ENCODE measurements at regions of chr6 and their contacts with region 1.

Region 1: GRCh38 chr6:134422426-134423231 is 104.7 kb upstream of the SGK1 start:
- DNase-seq: peak; percentile 98
- H3K4me3 ChIP-seq: no peak overlapping the region
- H3K27ac ChIP-seq: peak overlapping the region; percentile 95
- H3K4me1 ChIP-seq: peaks cover 48% of the 10 kb centered on the region
- H3K27me3 ChIP-seq: no peaks in the 10 kb centered on the region
- CTCF ChIP-seq: no peak

Region 2: GRCh38 chr6:134247231-134247833 is 175.3 kb before region 1 on chr6:
- CTCF ChIA-PET with region 1: no interaction called
- dilution Hi-C with region 1: no loop called
- in situ Hi-C with region 1: no loop called
- intact Hi-C with region 1: no loop called
- DNase-seq: peak; percentile 78
- H3K4me3 ChIP-seq: no peak overlapping the region
- H3K27ac ChIP-seq: peak overlapping the region; percentile 37
- H3K4me1 ChIP-seq: peaks cover 22% of the 10 kb centered on the region
- H3K27me3 ChIP-seq: no peaks in the 10 kb centered on the region
- CTCF ChIP-seq: no peak

Region 3: GRCh38 chr6:134288538-134289203 is 134.0 kb before region 1 on chr6:
- CTCF ChIA-PET with region 1: no interaction called
- dilution Hi-C with region 1: no loop called
- in situ Hi-C with region 1: no loop called
- intact Hi-C with region 1: loop called (anchors 2 kb)
- DNase-seq: peak; percentile 97
- H3K4me3 ChIP-seq: peak overlapping the region in 1 of 3 experiments; percentile 4
- H3K27ac ChIP-seq: peak overlapping the region; percentile 100
- H3K4me1 ChIP-seq: peaks cover 19% of the 10 kb centered on the region
- H3K27me3 ChIP-seq: no peaks in the 10 kb centered on the region
- CTCF ChIP-seq: no peak

Region 4: GRCh38 chr6:134322216-134322615 is 100.4 kb before region 1 on chr6:
- CTCF ChIA-PET with region 1: no interaction called
- dilution Hi-C with region 1: no loop called
- in situ Hi-C with region 1: no loop called
- intact Hi-C with region 1: no loop called
- DNase-seq: no peak
- H3K4me3 ChIP-seq: no peak overlapping the region
- H3K27ac ChIP-seq: no peak overlapping the region
- H3K4me1 ChIP-seq: peaks cover 4% of the 10 kb centered on the region
- H3K27me3 ChIP-seq: no peaks in the 10 kb centered on the region
- CTCF ChIP-seq: no peak

Region 5: GRCh38 chr6:134379086-134379485 is 43.5 kb before region 1 on chr6:
- CTCF ChIA-PET with region 1: no interaction called
- dilution Hi-C with region 1: loop called (anchors 5 kb)
- in situ Hi-C with region 1: no loop called
- intact Hi-C with region 1: no loop called
- DNase-seq: peak; percentile 97
- H3K4me3 ChIP-seq: no peak overlapping the region
- H3K27ac ChIP-seq: peak overlapping the region; percentile 64
- H3K4me1 ChIP-seq: peaks cover 34% of the 10 kb centered on the region
- H3K27me3 ChIP-seq: no peaks in the 10 kb centered on the region
- CTCF ChIP-seq: no peak

Region 6: DNA sequence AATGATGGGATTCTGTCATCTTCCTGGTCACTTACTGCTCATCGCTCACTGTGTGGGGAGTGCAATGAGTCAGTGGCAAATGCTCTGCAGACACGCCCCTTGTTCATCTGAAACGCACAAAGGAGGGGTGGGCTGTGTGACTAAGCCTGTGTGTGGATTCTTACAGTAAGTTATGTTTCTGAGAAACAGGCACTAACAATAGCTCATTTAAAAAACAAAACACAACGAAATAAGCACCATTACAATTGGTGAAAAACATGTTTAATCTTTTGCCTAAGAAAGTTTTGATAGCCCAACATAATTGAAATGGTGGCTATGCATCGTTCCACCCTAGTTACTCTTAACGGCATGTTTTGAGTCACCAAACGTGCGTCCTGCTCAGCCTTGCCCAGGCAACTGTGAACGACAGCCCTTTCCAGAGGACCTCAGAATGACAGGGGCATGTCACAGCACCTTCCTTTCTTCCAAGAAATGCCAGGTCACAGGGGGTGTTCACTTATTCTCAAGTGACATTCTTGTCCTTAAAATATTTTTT is 13.7 kb after region 1 on chr6:
- CTCF ChIA-PET with region 1: interaction called, 3 read pairs
- dilution Hi-C with region 1: no loop called
- in situ Hi-C with region 1: no loop called
- intact Hi-C with region 1: loop called (anchors 1 kb)
- DNase-seq: peak; percentile 97
- H3K4me3 ChIP-seq: peak overlapping the region in 1 of 3 experiments; percentile 8
- H3K27ac ChIP-seq: peak overlapping the region; percentile 98
- H3K4me1 ChIP-seq: peaks cover 33% of the 10 kb centered on the region
- H3K27me3 ChIP-seq: no peaks in the 10 kb centered on the region
- CTCF ChIP-seq: no peak

Region 7: GRCh38 chr6:134537146-134537555 is 114.5 kb after region 1 on chr6:
- CTCF ChIA-PET with region 1: no interaction called
- dilution Hi-C with region 1: no loop called
- in situ Hi-C with region 1: no loop called
- intact Hi-C with region 1: loop called (anchors 5 kb)
- DNase-seq: peak; percentile 100
- H3K4me3 ChIP-seq: no peak overlapping the region
- H3K27ac ChIP-seq: peak overlapping the region; percentile 83
- H3K4me1 ChIP-seq: peaks cover 57% of the 10 kb centered on the region
- H3K27me3 ChIP-seq: no peaks in the 10 kb centered on the region
- CTCF ChIP-seq: no peak

Region 8: GRCh38 chr6:134619789-134620188 is 197.2 kb after region 1 on chr6:
- CTCF ChIA-PET with region 1: interaction called, 3 read pairs
- dilution Hi-C with region 1: loop called (anchors 10 kb)
- in situ Hi-C with region 1: no loop called
- intact Hi-C with region 1: no loop called
- DNase-seq: peak; percentile 96
- H3K4me3 ChIP-seq: no peak overlapping the region
- H3K27ac ChIP-seq: peak overlapping the region; percentile 51
- H3K4me1 ChIP-seq: peaks cover 54% of the 10 kb centered on the region
- H3K27me3 ChIP-seq: no peaks in the 10 kb centered on the region
- CTCF ChIP-seq: no peak

Region 9: GRCh38 chr6:134853111-134854055 is 430.8 kb after region 1 on chr6:
- CTCF ChIA-PET with region 1: no interaction called
- dilution Hi-C with region 1: no loop called
- in situ Hi-C with region 1: no loop called
- intact Hi-C with region 1: no loop called
- DNase-seq: peak; percentile 64
- H3K4me3 ChIP-seq: no peak overlapping the region
- H3K27ac ChIP-seq: no peak overlapping the region
- H3K4me1 ChIP-seq: peaks cover 12% of the 10 kb centered on the region
- H3K27me3 ChIP-seq: no peaks in the 10 kb centered on the region
- CTCF ChIP-seq: no peak

Region 10: GRCh38 chr6:134882426-134883038 is 459.9 kb after region 1 on chr6:
- CTCF ChIA-PET with region 1: no interaction called
- dilution Hi-C with region 1: no loop called
- in situ Hi-C with region 1: no loop called
- intact Hi-C with region 1: no loop called
- DNase-seq: peak; percentile 67
- H3K4me3 ChIP-seq: no peak overlapping the region
- H3K27ac ChIP-seq: no peak overlapping the region
- H3K4me1 ChIP-seq: no peaks in the 10 kb centered on the region
- H3K27me3 ChIP-seq: no peaks in the 10 kb centered on the region
- CTCF ChIP-seq: peak; percentile 98

Measured in mammary epithelial cell (primary cell).